ENCODE measurements at regions of chr3 and their contacts with region 1.

Region 1: GRCh38 chr3:111859974-111860859 is 1.2 kb downstream of the PHLDB2 start:
- DNase-seq: peak; percentile 86

Region 2: DNA sequence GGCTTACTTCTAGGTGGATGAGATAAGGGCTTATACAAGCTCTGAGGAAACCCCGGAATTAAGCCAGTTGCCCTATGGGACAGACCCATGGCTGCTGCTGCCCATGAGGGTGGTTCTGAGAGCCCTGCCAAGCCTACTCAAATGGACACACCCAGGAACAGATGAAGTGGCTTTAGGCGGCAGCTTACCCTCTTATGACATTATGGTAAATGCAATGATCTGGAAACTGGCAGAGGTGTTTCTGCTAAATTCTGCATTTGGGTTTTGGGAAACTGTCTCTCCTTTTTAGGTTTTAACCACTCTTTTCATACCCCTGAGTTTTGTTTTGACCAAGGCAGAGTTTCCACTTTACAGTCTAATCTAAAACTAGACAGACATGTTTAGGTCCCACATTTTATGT is 256.1 kb before region 1 on chr3:
- intact Hi-C with region 1: no loop called
- DNase-seq: no peak

Region 3: GRCh38 chr3:111668912-111669488 is 191.2 kb before region 1 on chr3:
- intact Hi-C with region 1: loop called (anchors 2 kb)
- DNase-seq: no peak

Region 4: DNA sequence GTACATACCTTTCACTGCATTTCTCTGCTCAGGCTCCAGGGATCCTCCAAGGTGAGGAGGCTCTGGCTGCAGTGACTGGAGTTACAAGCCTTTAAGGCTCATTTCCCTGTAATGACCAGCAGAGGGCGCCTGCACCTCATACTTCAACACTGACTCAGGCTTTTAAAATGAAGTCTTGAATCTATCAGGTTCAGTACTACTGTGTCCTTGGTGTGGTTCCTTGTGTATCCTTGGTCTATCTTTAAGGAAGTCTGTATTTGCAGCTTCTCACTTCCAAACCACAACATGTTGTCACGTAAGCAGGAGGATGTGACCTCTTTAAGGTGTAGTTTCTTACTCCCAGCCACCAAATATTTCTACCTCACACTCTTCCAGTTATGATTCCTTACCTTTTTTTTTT is 142.6 kb before region 1 on chr3:
- intact Hi-C with region 1: loop called (anchors 1 kb)
- DNase-seq: peak; percentile 84

Region 5: GRCh38 chr3:111737706-111738086 is 122.5 kb before region 1 on chr3:
- intact Hi-C with region 1: loop called (anchors 1 kb)
- DNase-seq: no peak

Region 6: DNA sequence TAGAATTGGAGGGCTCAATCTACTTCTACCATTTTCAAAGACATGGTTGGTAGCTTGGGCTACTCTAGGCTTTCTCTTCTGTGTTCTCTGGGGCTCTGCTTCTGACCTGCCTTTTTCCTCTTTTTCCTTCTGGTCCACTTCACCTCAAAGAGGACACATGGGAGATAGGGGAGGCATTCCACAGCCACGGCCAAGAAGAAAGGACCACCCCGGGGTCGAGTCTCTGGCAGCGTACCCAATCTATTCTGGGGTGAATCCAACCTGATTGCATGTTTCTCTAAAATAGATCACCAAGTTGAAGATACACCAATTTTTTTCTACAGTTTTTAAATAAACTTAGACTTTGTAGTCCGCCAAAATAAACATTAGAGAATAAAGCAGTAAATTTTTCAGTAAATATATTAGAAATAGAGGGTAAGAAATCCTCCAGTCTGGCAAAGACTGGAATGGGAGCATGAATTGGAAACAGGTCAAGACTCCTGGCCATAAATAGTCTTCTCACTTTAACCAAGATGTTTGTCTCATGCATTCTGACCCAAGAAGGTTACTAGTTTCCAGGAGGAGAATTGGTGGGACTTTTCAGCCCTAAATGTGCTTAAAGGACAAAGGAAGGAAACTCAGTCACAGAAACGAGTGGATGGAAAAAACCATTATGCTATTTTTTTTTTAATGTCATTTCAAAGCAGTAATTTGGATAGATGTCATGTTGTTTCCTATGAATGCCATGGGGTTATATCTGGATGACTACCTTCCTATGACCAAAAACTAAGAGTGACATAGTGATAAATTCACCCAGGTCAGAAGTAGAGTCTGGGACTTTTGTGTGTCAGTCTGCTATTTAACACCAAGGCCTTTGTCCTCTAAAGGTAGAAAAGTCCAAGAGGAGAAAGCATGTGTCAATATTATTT is 72.4 kb before region 1 on chr3:
- intact Hi-C with region 1: loop called (anchors 5 kb)
- DNase-seq: no peak

Region 7: GRCh38 chr3:111904376-111905241 is 44.4 kb after region 1 on chr3:
- intact Hi-C with region 1: loop called (anchors 5 kb)
- DNase-seq: no peak

Region 8: GRCh38 chr3:111967651-111968274 is 107.5 kb after region 1 on chr3:
- intact Hi-C with region 1: loop called (anchors 2 kb)
- DNase-seq: peak; percentile 90

Region 9: DNA sequence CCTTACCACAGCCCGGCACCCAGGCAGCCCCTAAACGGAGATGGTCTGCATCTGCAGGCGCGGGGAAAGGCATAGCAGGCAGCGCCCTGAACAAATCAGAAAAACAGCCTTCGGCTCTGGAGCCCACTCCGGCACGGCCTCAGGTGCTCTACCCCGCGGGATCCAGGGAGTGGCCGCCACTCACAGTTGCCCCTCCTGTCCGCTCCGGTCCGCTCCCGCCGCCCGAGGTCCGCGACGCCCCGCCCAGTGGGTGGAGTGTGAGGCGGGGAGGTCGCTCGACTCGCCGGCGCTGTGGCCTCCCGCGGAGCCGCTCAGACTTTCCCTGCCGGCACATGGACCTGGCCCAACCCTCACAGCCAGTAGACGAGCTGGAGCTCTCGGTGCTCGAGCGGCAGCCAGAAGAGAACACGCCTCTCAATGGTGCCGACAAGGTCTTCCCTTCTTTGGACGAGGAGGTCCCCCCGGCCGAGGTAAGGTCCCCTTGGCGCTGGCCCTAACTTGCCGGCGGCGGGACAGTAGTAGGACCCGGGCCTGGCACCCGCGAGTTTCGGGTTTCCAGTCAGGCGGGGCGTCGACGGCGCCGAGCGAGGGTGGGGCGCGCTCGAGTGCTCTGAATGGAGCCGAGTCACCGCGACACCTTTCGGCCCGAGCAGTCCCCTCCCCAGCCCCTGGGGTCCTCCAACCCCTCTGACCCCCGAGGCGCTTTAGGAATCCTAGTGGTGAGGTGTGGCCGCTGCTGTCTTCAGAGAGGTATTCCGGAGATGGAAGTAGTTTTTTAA is 226.0 kb after region 1 on chr3 and contains the start of gene C3orf52:
- intact Hi-C with region 1: no loop called
- DNase-seq: peak; percentile 90
- total RNA-seq, gene C3orf52: 5.1 TPM

Region 10: GRCh38 chr3:112128843-112129727 is 268.9 kb after region 1 on chr3:
- intact Hi-C with region 1: no loop called
- DNase-seq: no peak